Panc1 (cell line): ENCODE measurements at regions of chr2 and their contacts with region 1.

Region 1: DNA sequence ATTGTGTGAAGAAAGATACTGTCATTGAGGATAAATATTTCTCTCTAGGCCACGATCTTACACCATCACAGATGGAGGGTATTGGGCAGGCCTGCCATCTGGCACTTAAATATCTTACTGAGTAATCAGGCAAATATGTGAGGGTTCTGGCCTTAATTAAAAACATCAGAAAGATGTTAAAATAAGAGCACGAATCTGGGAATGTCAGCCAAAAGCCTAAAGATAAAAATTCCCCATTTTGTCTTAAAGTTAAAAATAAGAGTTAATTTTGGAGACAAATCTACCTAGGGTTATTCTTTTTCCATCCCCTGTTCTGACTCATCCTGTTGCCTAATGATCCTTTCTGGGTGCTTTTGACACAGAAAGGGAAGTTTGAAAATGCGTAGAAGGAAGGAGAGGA is 121.0 kb downstream of the SUCLG1 start:
- DNase-seq: no peak
- ATAC-seq: no peak
- H3K4me3 ChIP-seq: no peak overlapping the region
- H3K27ac ChIP-seq: no peak overlapping the region
- H3K4me1 ChIP-seq: no peaks in the 10 kb centered on the region
- H3K27me3 ChIP-seq: no peaks in the 10 kb centered on the region
- CTCF ChIP-seq: no peak

Region 2: DNA sequence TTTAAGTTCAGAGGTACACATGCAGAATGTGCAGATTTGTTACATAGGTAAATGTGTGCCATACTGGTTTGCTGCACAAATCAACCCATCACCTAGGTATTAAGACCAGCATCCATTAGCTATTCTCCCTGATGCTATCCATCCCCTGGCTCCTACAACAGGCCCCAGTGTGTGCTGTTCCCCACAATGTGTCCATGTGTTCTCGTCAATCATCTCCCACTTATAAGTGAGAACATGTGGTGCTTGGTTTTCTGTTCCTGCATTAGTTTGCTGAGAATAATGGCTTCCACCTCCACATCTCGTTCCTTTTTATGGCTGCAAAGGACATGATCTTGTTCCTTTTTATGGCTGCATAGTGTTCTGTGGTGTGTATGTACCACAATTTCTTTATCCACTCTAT is 45.2 kb after region 1 on chr2:
- CTCF ChIA-PET with region 1: no interaction called
- POLR2A ChIA-PET with region 1: no interaction called
- in situ Hi-C with region 1: no loop called
- intact Hi-C with region 1: no loop called
- DNase-seq: no peak
- ATAC-seq: no peak
- H3K4me3 ChIP-seq: no peak overlapping the region
- H3K27ac ChIP-seq: no peak overlapping the region
- H3K4me1 ChIP-seq: no peaks in the 10 kb centered on the region
- H3K27me3 ChIP-seq: no peaks in the 10 kb centered on the region
- CTCF ChIP-seq: no peak

Region 3: DNA sequence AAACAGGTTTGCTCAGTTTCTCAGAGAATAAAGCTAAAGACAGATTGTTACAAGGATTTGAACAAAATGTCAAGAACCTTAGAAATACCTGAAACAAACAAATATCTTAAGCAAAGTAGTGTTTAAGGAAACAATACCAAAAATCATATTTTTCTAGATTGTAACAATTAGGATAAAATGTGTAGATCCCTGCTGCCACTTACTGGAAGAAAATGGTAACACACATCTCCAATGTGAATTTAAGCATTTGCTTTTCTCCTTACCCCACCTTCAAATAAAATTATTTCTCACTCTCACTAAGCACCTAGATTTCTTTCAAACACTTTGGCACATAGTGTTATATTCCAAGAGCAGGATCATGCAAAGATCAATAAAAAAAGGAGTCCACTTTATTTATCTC is 86.1 kb after region 1 on chr2:
- CTCF ChIA-PET with region 1: no interaction called
- POLR2A ChIA-PET with region 1: no interaction called
- in situ Hi-C with region 1: no loop called
- intact Hi-C with region 1: loop called (anchors 10 kb)
- DNase-seq: peak; percentile 12
- ATAC-seq: no peak
- H3K4me3 ChIP-seq: no peak overlapping the region
- H3K27ac ChIP-seq: no peak overlapping the region
- H3K4me1 ChIP-seq: no peaks in the 10 kb centered on the region
- H3K27me3 ChIP-seq: no peaks in the 10 kb centered on the region
- CTCF ChIP-seq: peak; percentile 61; the same call in 1 of the 2 replicates